Activated CD4-positive, alpha-beta memory T cell treated with anti-CD3 and anti-CD28 coated beads, Interleukin-2, amount 10 ng/mL, durations not matched to agents 7 days and 5 days (primary cell): ENCODE measurements at regions of chr19 and their contacts with region 1.

Region 1: DNA sequence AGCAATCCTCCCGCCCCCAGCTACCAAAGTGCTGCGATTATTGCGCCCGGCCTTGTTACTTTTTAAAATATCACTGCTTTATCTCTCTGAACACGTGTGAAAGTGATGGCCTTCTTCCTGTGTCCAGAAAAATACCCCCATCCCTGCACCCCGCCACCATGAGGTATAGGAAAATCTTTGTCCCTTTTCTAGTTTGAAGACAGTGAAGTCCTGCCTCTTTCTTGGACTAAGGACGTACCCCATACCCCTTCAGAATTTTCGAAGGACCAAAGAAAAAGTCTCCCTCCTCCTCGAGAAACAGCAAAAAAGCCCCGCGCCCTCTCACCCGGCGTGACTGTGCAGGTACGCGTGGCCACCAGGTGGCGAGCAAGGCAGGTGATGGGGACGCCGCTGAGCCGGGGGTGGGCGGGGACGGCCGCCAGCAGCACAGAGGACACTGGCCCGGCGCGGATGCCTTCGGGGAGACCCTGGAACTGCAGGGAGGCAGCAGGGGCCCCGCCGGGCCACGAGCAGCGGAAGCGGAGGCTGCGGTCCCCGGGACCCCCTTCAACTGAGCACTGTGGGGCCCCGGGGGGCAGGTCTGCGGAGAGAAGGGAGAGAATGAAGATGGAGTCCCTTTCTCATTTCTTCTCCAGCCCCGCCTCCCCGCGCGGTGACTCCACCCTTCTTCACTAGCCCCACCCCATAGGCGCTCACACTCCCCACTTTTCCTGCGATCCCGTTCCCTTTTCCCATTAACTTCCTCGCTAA is 3.2 kb downstream of the VSIG10L start:
- DNase-seq: peak; percentile 90
- H3K4me3 Mint-ChIP-seq: peak overlapping the region; percentile 89
- H3K27ac Mint-ChIP-seq: peak overlapping the region; percentile 76
- H3K4me1 Mint-ChIP-seq: peaks cover 12% of the 10 kb centered on the region
- H3K27me3 Mint-ChIP-seq: peaks cover 9% of the 10 kb centered on the region

Region 2: DNA sequence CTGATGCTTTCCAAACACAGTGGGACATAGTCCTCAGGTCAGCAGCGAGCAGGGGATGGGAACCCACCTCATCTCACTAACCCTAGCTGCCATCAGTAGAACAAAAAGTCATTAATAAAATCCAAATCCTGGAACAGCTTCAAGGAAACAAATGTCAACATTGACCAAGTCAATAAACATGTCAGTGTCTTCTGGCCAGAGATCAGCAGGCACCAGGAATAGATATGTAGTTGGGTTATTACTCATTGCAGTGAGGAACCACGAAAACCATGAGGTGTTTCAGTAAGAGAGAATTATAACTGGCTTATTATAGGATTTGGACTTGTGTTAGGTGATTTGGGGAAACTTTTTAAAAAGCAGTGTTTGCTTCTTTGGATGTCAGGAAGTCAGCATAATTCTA is 131.0 kb before region 1 on chr19:
- CTCF ChIA-PET with region 1: no interaction called
- POLR2A ChIA-PET with region 1: no interaction called
- DNase-seq: no peak
- H3K4me3 Mint-ChIP-seq: no peak overlapping the region
- H3K27ac Mint-ChIP-seq: no peak overlapping the region
- H3K4me1 Mint-ChIP-seq: peaks cover 36% of the 10 kb centered on the region
- H3K27me3 Mint-ChIP-seq: peaks cover 55% of the 10 kb centered on the region

Region 3: DNA sequence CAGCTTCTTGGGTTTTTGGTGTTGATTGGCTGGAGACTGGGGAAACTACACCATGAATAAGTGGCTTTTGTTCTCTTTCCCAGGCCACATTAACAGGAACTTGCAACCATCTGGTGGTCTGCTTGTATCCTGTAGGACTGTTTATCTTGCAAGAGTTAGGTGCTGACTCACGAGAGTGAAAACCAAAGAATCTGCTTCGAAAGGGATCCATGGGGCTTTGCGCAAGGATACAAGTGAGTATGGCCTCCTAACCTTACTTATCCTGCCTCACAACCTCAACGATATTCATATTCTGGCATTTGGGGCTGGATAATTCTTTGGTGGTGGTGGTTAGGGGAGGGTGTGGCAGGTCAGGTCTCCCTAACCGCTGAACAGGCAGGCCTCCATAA is 92.6 kb before region 1 on chr19:
- CTCF ChIA-PET with region 1: no interaction called
- POLR2A ChIA-PET with region 1: no interaction called
- DNase-seq: peak; percentile 37
- H3K4me3 Mint-ChIP-seq: peak overlapping the region; percentile 66
- H3K27ac Mint-ChIP-seq: peak overlapping the region; percentile 90
- H3K4me1 Mint-ChIP-seq: peaks cover 77% of the 10 kb centered on the region
- H3K27me3 Mint-ChIP-seq: peaks cover 7% of the 10 kb centered on the region

Region 4: GRCh38 chr19:51367565-51368365 is 29.0 kb after region 1 on chr19:
- CTCF ChIA-PET with region 1: interaction called, 10 read pairs
- POLR2A ChIA-PET with region 1: interaction called, 12 read pairs
- DNase-seq: peak; percentile 99
- H3K4me3 Mint-ChIP-seq: peak overlapping the region; percentile 95
- H3K27ac Mint-ChIP-seq: peak overlapping the region; percentile 100
- H3K4me1 Mint-ChIP-seq: peaks cover 76% of the 10 kb centered on the region
- H3K27me3 Mint-ChIP-seq: no peaks in the 10 kb centered on the region

Region 5: DNA sequence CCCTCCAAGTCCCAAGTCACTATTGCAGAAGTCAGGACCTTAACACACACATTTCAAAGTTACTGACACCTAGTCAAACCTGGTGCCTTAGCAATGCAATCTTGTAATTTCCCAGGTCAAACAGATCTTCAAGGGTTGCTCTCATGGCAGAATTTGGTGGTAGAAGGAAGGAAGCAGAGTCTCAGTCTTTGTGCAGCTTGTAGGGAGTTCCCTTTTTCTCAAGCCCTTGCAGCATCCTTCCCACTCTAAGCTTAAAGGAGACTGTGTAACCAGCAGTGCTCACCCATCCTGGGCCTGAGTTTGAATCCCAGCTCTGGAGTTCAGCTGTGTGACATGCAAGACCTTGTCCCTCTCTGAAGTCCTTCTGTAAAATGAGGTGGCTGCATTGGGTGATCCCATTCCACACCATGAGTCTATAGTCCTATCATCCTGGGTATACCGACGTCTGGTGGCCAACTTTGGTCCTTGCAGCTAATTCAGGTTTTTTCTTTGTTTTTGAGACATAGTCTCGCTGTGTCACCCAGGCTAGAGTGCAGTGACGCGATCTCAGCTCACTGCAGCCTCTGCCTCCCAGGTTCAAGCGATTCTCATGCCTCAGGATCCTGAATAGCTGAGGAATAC is 68.9 kb after region 1 on chr19:
- CTCF ChIA-PET with region 1: interaction called, 14 read pairs
- POLR2A ChIA-PET with region 1: interaction called, 4 read pairs
- DNase-seq: peak; percentile 51
- H3K4me3 Mint-ChIP-seq: no peak overlapping the region
- H3K27ac Mint-ChIP-seq: no peak overlapping the region
- H3K4me1 Mint-ChIP-seq: peaks cover 8% of the 10 kb centered on the region
- H3K27me3 Mint-ChIP-seq: no peaks in the 10 kb centered on the region

Region 6: GRCh38 chr19:51441410-51442390 is 103.0 kb after region 1 on chr19:
- CTCF ChIA-PET with region 1: interaction called, 31 read pairs
- POLR2A ChIA-PET with region 1: interaction called, 3 read pairs
- DNase-seq: peak; percentile 95
- H3K4me3 Mint-ChIP-seq: peak overlapping the region; percentile 72
- H3K27ac Mint-ChIP-seq: peak overlapping the region; percentile 77
- H3K4me1 Mint-ChIP-seq: peaks cover 47% of the 10 kb centered on the region
- H3K27me3 Mint-ChIP-seq: peaks cover 29% of the 10 kb centered on the region

Region 7: DNA sequence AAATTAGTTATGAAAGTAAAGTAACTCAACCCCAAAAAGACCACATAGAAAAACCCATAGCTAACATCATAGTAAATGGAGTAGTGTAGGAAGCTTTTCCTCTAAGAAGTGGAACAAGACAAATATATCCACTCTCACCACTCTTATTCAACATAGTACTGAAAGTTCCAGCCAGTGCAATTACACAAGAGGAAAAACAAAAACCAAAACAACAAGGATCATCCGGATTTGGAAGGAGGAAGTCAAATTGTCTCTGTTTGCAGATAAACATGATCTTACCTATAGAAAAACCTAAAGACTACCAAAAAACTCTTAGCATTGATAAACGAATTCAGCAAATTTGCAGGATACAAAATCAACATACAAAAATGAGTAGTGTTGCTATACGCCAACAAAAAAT is 128.0 kb after region 1 on chr19:
- CTCF ChIA-PET with region 1: no interaction called
- POLR2A ChIA-PET with region 1: no interaction called
- DNase-seq: no peak
- H3K4me3 Mint-ChIP-seq: no peak overlapping the region
- H3K27ac Mint-ChIP-seq: no peak overlapping the region
- H3K4me1 Mint-ChIP-seq: peaks cover 36% of the 10 kb centered on the region
- H3K27me3 Mint-ChIP-seq: peaks cover 30% of the 10 kb centered on the region

Region 8: GRCh38 chr19:51480590-51480989 is 141.9 kb after region 1 on chr19:
- CTCF ChIA-PET with region 1: no interaction called
- POLR2A ChIA-PET with region 1: no interaction called
- DNase-seq: no peak
- H3K4me3 Mint-ChIP-seq: no peak overlapping the region
- H3K27ac Mint-ChIP-seq: no peak overlapping the region
- H3K4me1 Mint-ChIP-seq: no peaks in the 10 kb centered on the region
- H3K27me3 Mint-ChIP-seq: peaks cover 15% of the 10 kb centered on the region